CD4-positive, alpha-beta memory T cell (primary cell): ENCODE measurements at regions of chr1 and their contacts with region 1.

Region 1: GRCh38 chr1:185317034-185317885 is at the start of gene IVNS1ABP:
- DNase-seq: peak; percentile 94 to 97 (median 96)
- H3K4me3 ChIP-seq: peak within 1 kb of the TSS; percentile 82 to 90
- H3K4me3 Mint-ChIP-seq: peak within 1 kb of the TSS; percentile 93 to 99 (median 97)
- H3K27ac ChIP-seq: peak within 1 kb of the TSS; percentile 99
- H3K27ac Mint-ChIP-seq: peak within 1 kb of the TSS; percentile 99 to 100 (median 99)
- H3K4me1 ChIP-seq: peaks cover 47% of the 10 kb centered on the region
- H3K4me1 Mint-ChIP-seq: peaks cover 29 to 58% (median 47%) of the 10 kb centered on the region in 4 donors
- H3K27me3 ChIP-seq: no peaks in the 10 kb centered on the region
- H3K27me3 Mint-ChIP-seq: no peaks in the 10 kb centered on the region
- total RNA-seq, gene IVNS1ABP: 179 to 187 TPM

Region 2: GRCh38 chr1:183471743-183472487 is 1845.3 kb before region 1 on chr1:
- CTCF ChIA-PET with region 1: no interaction called
- POLR2A ChIA-PET with region 1: no interaction called
- intact Hi-C with region 1: loop called (anchors 2 kb)
- DNase-seq: peak; percentile 96 to 99 (median 97)
- H3K4me3 ChIP-seq: peak overlapping the region; percentile 82 to 98
- H3K4me3 Mint-ChIP-seq: peak overlapping the region; percentile 90 to 99 (median 96)
- H3K27ac ChIP-seq: peak overlapping the region; percentile 91
- H3K27ac Mint-ChIP-seq: peak overlapping the region; percentile 99 to 100 (median 100)
- H3K4me1 ChIP-seq: peaks cover 39% of the 10 kb centered on the region
- H3K4me1 Mint-ChIP-seq: peaks cover 13 to 43% (median 19%) of the 10 kb centered on the region in 4 donors
- H3K27me3 ChIP-seq: no peaks in the 10 kb centered on the region
- H3K27me3 Mint-ChIP-seq: peaks cover 0 to 3% of the 10 kb centered on the region in 2 donors

Region 3: GRCh38 chr1:185156854-185157598 is 160.2 kb before region 1 on chr1 and contains the starts of genes SWT1 and TRMT1L:
- CTCF ChIA-PET with region 1: no interaction called
- POLR2A ChIA-PET with region 1: interaction called, 45 read pairs
- intact Hi-C with region 1: loop called (anchors 1 kb)
- DNase-seq: peak; percentile 97 to 99 (median 98)
- H3K4me3 ChIP-seq: peak within 1 kb of the TSS; percentile 61 to 88
- H3K4me3 Mint-ChIP-seq: peak within 1 kb of the TSS; percentile 98 to 100 (median 99)
- H3K27ac ChIP-seq: peak within 1 kb of the TSS; percentile 97
- H3K27ac Mint-ChIP-seq: peak within 1 kb of the TSS; percentile 98 to 100 (median 99)
- H3K4me1 ChIP-seq: peaks cover 30% of the 10 kb centered on the region
- H3K4me1 Mint-ChIP-seq: peaks cover 24 to 54% (median 39%) of the 10 kb centered on the region in 4 donors
- H3K27me3 ChIP-seq: no peaks in the 10 kb centered on the region
- H3K27me3 Mint-ChIP-seq: no peaks in the 10 kb centered on the region
- total RNA-seq, gene SWT1: 9.7 to 10.6 TPM
- total RNA-seq, gene TRMT1L: 31.7 to 33.9 TPM

Region 4: GRCh38 chr1:185281245-185281644 is 36.0 kb before region 1 on chr1:
- CTCF ChIA-PET with region 1: interaction called, 28 read pairs
- POLR2A ChIA-PET with region 1: interaction called, 174 read pairs
- intact Hi-C with region 1: loop called (anchors 2 kb)
- DNase-seq: peak; percentile 62 to 80 (median 76)
- H3K4me3 ChIP-seq: no peak overlapping the region
- H3K4me3 Mint-ChIP-seq: peak overlapping the region; percentile 33 to 89 (median 78)
- H3K27ac ChIP-seq: peak overlapping the region; percentile 31
- H3K27ac Mint-ChIP-seq: peak overlapping the region; percentile 86 to 97 (median 95)
- H3K4me1 ChIP-seq: peaks cover 65% of the 10 kb centered on the region
- H3K4me1 Mint-ChIP-seq: peaks cover 46 to 76% (median 64%) of the 10 kb centered on the region in 4 donors
- H3K27me3 ChIP-seq: no peaks in the 10 kb centered on the region
- H3K27me3 Mint-ChIP-seq: no peaks in the 10 kb centered on the region

Region 5: GRCh38 chr1:185393815-185394214 is 76.6 kb after region 1 on chr1:
- CTCF ChIA-PET with region 1: no interaction called
- POLR2A ChIA-PET with region 1: no interaction called
- intact Hi-C with region 1: loop called (anchors 5 kb)
- DNase-seq: no peak
- H3K4me3 ChIP-seq: no peak overlapping the region
- H3K4me3 Mint-ChIP-seq: no peak overlapping the region
- H3K27ac ChIP-seq: no peak overlapping the region
- H3K27ac Mint-ChIP-seq: no peak overlapping the region
- H3K4me1 ChIP-seq: no peaks in the 10 kb centered on the region
- H3K4me1 Mint-ChIP-seq: peaks cover 0 to 4% (median under 1%) of the 10 kb centered on the region in 4 donors
- H3K27me3 ChIP-seq: no peaks in the 10 kb centered on the region
- H3K27me3 Mint-ChIP-seq: no peaks in the 10 kb centered on the region

Region 6: DNA sequence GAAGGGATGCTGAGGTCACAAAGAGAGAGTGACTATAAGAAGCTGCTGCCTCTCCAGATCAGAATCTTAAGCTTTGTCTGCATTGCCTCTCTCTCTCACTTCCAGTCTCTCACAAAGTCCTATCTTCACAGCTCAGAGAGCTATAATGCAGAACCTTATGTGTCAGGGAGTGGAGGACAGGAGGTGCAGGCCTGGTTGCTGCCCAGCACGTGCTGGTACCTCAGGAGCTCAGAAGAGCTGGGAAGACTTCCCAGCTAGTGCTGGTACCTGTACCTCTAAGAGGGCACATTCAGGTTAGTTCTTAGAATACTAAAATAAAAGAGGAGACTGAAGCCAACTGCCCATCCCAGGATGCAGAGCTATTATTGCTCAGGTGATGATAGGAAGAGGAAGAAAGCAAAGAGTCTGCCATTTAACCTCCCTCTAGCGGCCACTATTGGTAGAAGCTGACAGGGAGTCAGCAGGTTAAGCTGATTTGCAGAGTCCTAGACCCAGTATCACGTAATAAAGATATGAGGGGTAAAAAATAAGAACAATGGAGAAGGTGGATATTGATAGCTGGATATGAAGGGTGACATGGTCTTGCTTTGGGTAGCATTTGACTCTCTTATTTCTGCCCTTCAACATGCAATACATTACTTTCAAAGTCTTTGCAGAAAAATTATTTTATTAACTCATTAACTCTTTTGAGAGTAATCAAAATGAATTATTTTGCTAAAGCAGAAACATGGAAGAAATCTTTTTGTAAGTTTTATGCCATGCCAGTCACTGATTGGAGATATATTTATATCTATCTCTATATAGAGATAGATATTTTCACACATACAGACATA is 278.8 kb after region 1 on chr1:
- CTCF ChIA-PET with region 1: interaction called, 63 read pairs
- POLR2A ChIA-PET with region 1: interaction called, 75 read pairs
- intact Hi-C with region 1: loop called (anchors 1 kb)
- DNase-seq: peak; percentile 56 to 67 (median 62)
- H3K4me3 ChIP-seq: no peak overlapping the region
- H3K4me3 Mint-ChIP-seq: no peak overlapping the region
- H3K27ac ChIP-seq: no peak overlapping the region
- H3K27ac Mint-ChIP-seq: peak overlapping the region in 6 of 7 donors; percentile 14 to 72 (median 39)
- H3K4me1 ChIP-seq: peaks cover 27% of the 10 kb centered on the region
- H3K4me1 Mint-ChIP-seq: peaks cover 31 to 39% (median 33%) of the 10 kb centered on the region in 4 donors
- H3K27me3 ChIP-seq: no peaks in the 10 kb centered on the region
- H3K27me3 Mint-ChIP-seq: no peaks in the 10 kb centered on the region

Region 7: GRCh38 chr1:186375088-186375953 is 1058.1 kb after region 1 on chr1 and contains the starts of genes ODR4 and TPR:
- CTCF ChIA-PET with region 1: interaction called, 3 read pairs
- POLR2A ChIA-PET with region 1: interaction called, 7 read pairs
- intact Hi-C with region 1: loop called (anchors 1 kb)
- DNase-seq: peak; percentile 97 to 99 (median 98)
- H3K4me3 ChIP-seq: peak within 1 kb of the TSS; percentile 87 to 96
- H3K4me3 Mint-ChIP-seq: peak within 1 kb of the TSS; percentile 91 to 99 (median 98)
- H3K27ac ChIP-seq: peak within 1 kb of the TSS; percentile 83
- H3K27ac Mint-ChIP-seq: peak within 1 kb of the TSS; percentile 93 to 99 (median 98)
- H3K4me1 ChIP-seq: peaks cover 44% of the 10 kb centered on the region
- H3K4me1 Mint-ChIP-seq: peaks cover 19 to 61% (median 39%) of the 10 kb centered on the region in 4 donors
- H3K27me3 ChIP-seq: no peaks in the 10 kb centered on the region
- H3K27me3 Mint-ChIP-seq: no peaks in the 10 kb centered on the region
- total RNA-seq, gene ODR4: 15.9 to 17.3 TPM
- total RNA-seq, gene TPR: 159 to 167 TPM